H1 (cell line): ENCODE measurements at regions of chr1 and their contacts with region 1.

Region 1: DNA sequence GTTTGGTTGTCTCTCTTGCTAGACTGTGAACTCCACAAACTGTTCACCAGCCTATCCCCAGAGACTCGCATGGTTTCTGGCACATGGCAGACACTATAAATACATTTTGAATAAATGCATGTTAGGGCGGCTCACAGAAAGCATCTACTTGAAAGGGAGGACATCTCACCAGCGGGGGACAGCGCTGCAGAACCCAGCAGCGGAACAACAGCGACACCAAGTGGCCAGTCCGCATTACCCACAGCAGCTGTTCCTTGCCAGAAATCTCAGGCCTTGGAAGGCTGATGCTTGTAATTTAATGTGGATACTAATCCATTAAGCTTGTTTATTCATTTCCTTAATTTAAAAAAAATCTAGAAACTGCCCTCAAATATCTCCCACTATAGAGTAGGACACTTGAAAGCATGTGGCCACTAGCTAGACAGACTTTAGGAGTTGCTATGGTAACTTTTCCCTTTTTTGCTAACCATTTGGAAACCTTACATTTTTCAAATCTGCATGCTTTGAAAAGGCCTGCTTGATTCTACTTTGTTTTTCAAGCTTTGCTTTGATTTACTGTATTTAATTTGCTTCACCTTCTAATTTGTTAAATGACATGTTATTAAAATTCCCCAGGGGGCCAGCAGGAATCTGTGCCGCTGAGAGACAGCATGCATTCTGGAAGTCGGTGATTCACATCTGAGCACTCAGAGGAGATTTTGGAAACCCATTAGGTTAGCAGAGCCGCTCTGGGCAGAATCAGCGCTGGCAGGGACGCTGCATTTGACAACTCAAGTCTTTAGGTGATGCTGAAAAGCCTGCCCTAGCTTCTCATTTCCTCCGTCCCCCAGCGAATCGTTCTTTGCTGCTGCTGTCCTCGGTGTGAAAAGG is 63.5 kb upstream of the SSX2IP start:
- DNase-seq: peak; percentile 59 to 85
- H3K4me3 ChIP-seq: no peak overlapping the region
- H3K27ac ChIP-seq: no peak overlapping the region
- H3K4me1 ChIP-seq: peaks cover 0 to 12% (median 2%) of the 10 kb centered on the region in 4 experiments; a peak in 4 of 7 replicates
- H3K27me3 ChIP-seq: no peaks in the 10 kb centered on the region
- CTCF ChIP-seq: peak; percentile 95 to 96 (median 96)
- EP300 ChIP-seq: no peak
- POLR2A ChIP-seq: no peak
- RAD21 ChIP-seq: peak; percentile 99 to 100

Region 2: GRCh38 chr1:84620720-84621313 is 132.9 kb before region 1 on chr1:
- CTCF ChIA-PET with region 1: interaction called, 11 read pairs
- POLR2A ChIA-PET with region 1: no interaction called
- DNase-seq: peak; percentile 63 to 96
- H3K4me3 ChIP-seq: peak overlapping the region; percentile 26 to 75 (median 66)
- H3K27ac ChIP-seq: peak overlapping the region; percentile 49; the same call in 1 of the 2 replicates
- H3K4me1 ChIP-seq: peaks cover 0 to 3% (median 0%) of the 10 kb centered on the region in 4 experiments; a peak in 1 of 7 replicates
- H3K27me3 ChIP-seq: no peaks in the 10 kb centered on the region
- CTCF ChIP-seq: peak; percentile 71 to 78 (median 74)
- EP300 ChIP-seq: no peak
- POLR2A ChIP-seq: peak in 1 of 2 experiments; percentile 71; a peak in 1 of 3 replicates
- RAD21 ChIP-seq: peak; percentile 43 to 48

Region 3: GRCh38 chr1:84735483-84735882 is 18.3 kb before region 1 on chr1:
- CTCF ChIA-PET with region 1: interaction called, 34 read pairs
- POLR2A ChIA-PET with region 1: interaction called, 3 read pairs
- DNase-seq: no peak
- H3K4me3 ChIP-seq: no peak overlapping the region
- H3K27ac ChIP-seq: no peak overlapping the region
- H3K4me1 ChIP-seq: peaks cover 0 to 14% (median 4%) of the 10 kb centered on the region in 4 experiments; a peak in 4 of 7 replicates
- H3K27me3 ChIP-seq: no peaks in the 10 kb centered on the region
- CTCF ChIP-seq: no peak
- EP300 ChIP-seq: no peak
- POLR2A ChIP-seq: no peak
- RAD21 ChIP-seq: no peak

Region 4: GRCh38 chr1:84763912-84764663 is 10.3 kb after region 1 on chr1:
- CTCF ChIA-PET with region 1: interaction called, 20 read pairs
- POLR2A ChIA-PET with region 1: no interaction called
- DNase-seq: no peak
- H3K4me3 ChIP-seq: peak overlapping the region in 1 of 4 experiments; percentile 34; a peak in 1 of 8 replicates
- H3K27ac ChIP-seq: no peak overlapping the region
- H3K4me1 ChIP-seq: peaks cover 3 to 9% (median 7%) of the 10 kb centered on the region in 4 experiments
- H3K27me3 ChIP-seq: no peaks in the 10 kb centered on the region; a peak in 2 of 7 replicates
- CTCF ChIP-seq: no peak
- EP300 ChIP-seq: no peak
- POLR2A ChIP-seq: no peak
- RAD21 ChIP-seq: no peak